ENCODE measurements at regions of chr13 and their contacts with region 1.

Region 1: DNA sequence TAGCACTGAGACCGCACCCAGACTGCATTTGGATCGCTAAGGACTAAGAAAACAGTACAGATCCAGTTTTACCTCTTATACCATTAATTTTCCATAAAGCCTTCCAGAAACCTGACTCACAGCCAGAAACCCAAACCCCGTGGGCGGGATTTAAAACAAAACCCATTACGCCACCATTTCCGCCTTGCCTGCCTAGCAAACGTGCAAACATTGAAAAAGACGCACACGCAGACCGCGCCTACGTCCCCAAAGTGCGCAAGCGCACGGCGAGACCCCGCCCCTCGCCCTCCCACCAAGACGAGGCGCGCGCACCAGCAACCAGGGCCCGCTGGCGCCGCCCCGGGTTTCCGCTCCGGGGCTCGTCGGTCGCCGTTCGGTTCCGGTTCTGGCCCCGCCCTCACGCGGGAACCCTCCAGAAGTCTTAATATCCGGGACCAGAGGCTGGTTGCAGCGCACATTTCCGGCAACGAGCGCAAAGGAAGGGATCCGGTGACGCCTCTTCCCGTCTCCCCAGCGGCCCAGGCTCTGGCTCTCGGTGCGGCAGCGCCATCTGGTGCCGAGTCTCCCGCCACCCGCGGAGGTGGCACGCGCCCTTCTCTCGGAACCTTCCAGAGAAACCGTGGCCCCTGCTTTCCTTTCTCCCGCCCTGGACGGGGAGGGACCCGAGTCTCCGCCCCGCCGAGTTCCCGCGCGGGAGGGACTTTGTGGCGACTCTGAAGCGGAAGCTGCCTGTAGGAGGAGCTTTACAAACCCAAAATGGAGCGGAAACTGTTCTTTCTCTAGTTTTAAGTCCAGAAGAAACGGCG is 256.9 kb upstream of the STARD13 start:
- DNase-seq: peak; percentile 98
- H3K4me3 Mint-ChIP-seq: peak overlapping the region; percentile 79
- H3K27ac Mint-ChIP-seq: peak overlapping the region; percentile 99
- H3K4me1 Mint-ChIP-seq: peaks cover 54% of the 10 kb centered on the region
- H3K27me3 Mint-ChIP-seq: no peaks in the 10 kb centered on the region

Region 2: DNA sequence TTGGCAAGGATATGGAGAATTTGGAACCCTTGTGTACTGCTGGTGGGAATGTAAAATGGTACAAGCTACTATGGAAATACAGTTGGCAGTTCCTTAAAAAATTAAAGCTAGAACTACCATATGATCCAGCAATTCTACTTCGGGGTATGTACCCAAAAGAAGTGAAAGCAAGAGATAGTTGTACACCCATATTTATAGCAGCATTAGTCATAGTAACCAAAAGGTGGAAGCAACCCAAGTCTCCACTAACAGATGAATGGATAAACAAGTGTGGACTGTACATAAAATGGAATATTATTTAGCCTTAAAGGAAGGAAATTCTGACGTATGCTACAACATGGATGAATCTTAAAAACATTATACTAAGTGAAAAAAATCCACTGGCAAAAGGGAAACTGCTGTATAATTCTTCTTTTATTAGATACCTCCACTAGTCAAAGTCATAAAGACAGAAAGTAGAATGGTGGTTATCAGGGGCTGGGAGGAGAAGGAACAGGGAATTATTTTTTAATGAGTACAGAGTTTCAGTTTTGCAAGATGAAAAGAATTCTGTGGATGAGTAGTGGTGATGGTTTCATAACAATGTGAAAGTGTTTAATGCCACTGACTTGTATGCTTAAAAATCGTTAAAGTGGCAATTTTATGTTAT is 1661.5 kb before region 1 on chr13:
- CTCF ChIA-PET with region 1: no interaction called
- intact Hi-C with region 1: no loop called
- DNase-seq: no peak
- H3K4me3 Mint-ChIP-seq: no peak overlapping the region
- H3K27ac Mint-ChIP-seq: no peak overlapping the region
- H3K4me1 Mint-ChIP-seq: no peaks in the 10 kb centered on the region
- H3K27me3 Mint-ChIP-seq: peaks cover 2% of the 10 kb centered on the region

Region 3: GRCh38 chr13:32427852-32428580 is 1114.5 kb before region 1 on chr13 and contains the start of gene N4BP2L1:
- CTCF ChIA-PET with region 1: no interaction called
- intact Hi-C with region 1: loop called (anchors 1 kb)
- DNase-seq: peak; percentile 95
- H3K4me3 Mint-ChIP-seq: peak within 1 kb of the TSS; percentile 94
- H3K27ac Mint-ChIP-seq: peak within 1 kb of the TSS; percentile 97
- H3K4me1 Mint-ChIP-seq: peaks cover 31% of the 10 kb centered on the region
- H3K27me3 Mint-ChIP-seq: no peaks in the 10 kb centered on the region
- total RNA-seq, gene N4BP2L1: 22.6 TPM

Region 4: GRCh38 chr13:32682740-32683139 is 859.7 kb before region 1 on chr13:
- CTCF ChIA-PET with region 1: no interaction called
- intact Hi-C with region 1: loop called (anchors 1 kb)
- DNase-seq: no peak
- H3K4me3 Mint-ChIP-seq: no peak overlapping the region
- H3K27ac Mint-ChIP-seq: no peak overlapping the region
- H3K4me1 Mint-ChIP-seq: peaks cover 17% of the 10 kb centered on the region
- H3K27me3 Mint-ChIP-seq: no peaks in the 10 kb centered on the region

Region 5: DNA sequence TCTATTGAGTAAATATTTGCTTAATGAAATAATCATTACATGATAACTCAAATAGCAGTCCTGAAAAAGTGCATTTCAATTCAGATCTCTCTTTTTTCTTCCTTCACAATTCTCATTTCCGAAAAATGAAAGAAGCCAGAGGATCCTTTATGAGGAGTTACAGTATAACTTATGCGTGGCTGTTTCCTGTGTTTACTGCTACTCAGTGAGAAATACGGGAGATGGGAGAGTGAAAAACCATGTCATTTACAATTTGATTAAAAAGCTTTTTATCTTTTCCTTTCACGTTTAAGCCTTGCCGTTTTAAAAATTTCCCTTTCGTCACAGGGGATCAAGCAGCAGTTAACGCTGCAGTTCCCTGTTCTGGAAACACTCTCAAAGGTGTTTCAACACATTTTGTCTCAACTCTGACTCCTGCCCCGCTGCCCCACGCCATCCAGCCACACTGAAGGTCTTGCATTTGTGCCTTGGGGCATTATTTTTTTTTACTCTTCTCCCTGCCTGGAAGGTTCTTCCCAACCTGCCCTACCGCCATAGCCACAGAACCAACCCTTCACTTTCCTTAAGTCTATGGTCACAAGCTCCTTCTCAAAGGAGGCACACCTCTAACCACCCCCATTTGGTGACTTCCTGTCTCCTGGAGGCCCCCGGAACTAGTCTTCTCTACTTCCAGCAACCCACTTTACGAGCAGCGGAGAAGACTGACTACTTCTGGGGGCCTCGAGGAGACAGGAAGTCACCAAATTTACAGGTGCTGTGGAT is 509.3 kb before region 1 on chr13:
- CTCF ChIA-PET with region 1: no interaction called
- intact Hi-C with region 1: loop called (anchors 2 kb)
- DNase-seq: peak; percentile 56
- H3K4me3 Mint-ChIP-seq: peak overlapping the region; percentile 74
- H3K27ac Mint-ChIP-seq: peak overlapping the region; percentile 87
- H3K4me1 Mint-ChIP-seq: peaks cover 7% of the 10 kb centered on the region
- H3K27me3 Mint-ChIP-seq: peaks cover 1% of the 10 kb centered on the region

Region 6: GRCh38 chr13:33639626-33640080 is 97.2 kb after region 1 on chr13:
- CTCF ChIA-PET with region 1: no interaction called
- intact Hi-C with region 1: loop called (anchors 1 kb)
- DNase-seq: peak; percentile 81
- H3K4me3 Mint-ChIP-seq: no peak overlapping the region
- H3K27ac Mint-ChIP-seq: peak overlapping the region; percentile 80
- H3K4me1 Mint-ChIP-seq: peaks cover 41% of the 10 kb centered on the region
- H3K27me3 Mint-ChIP-seq: no peaks in the 10 kb centered on the region

Region 7: GRCh38 chr13:34941835-34942731 is 1399.6 kb after region 1 on chr13 and contains the start of gene NBEA:
- CTCF ChIA-PET with region 1: no interaction called
- intact Hi-C with region 1: loop called (anchors 10 kb)
- DNase-seq: peak; percentile 70
- H3K4me3 Mint-ChIP-seq: peak within 1 kb of the TSS; percentile 84
- H3K27ac Mint-ChIP-seq: no peak within 1 kb of the TSS
- H3K4me1 Mint-ChIP-seq: peaks cover 21% of the 10 kb centered on the region
- H3K27me3 Mint-ChIP-seq: peaks cover 40% of the 10 kb centered on the region
- total RNA-seq, gene NBEA: 0.26 to 0.67 TPM

Measured in activated naive CD4-positive, alpha-beta T cell treated with anti-CD3 and anti-CD28 coated beads for 36 hours (primary cell).